Esophagus squamous epithelium (tissue), 5 donors: ENCODE measurements at regions of chr13 and their contacts with region 1.

Region 1: DNA sequence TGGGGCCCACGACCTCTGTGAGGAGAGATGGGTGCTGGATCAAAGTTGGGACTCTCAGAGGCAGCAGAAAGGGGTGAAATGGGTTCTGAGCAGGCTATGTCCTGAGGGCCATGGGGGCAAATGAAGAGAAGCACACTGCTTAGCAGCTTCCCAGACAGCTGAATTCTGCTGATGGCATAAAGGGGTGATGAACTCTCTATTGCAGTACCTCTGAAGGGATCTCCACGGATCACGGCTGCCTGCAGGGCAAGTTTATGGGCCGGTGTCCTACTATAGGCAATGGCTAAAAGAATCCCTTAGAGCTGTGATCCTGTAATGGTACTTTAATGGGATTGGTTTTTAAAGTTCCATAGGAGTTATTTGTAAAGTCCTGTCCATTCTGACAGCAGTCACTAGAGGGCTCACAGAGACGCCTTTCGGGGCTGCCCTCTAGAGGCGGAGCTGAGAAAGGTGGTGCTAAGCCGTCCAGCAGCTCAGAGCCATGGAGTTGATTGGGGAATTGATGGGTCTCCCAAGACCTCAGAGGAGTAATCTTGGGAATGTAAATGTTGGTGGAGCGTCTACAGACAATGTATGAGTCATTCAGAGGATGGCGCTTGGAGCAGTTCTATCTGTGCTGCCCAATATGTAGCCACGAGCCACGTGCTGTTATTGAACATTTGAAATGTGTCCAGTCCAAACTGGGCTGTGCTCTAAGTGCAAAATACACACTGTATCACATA is 287.3 kb downstream of the COG6 start:
- DNase-seq: no peak
- H3K4me3 ChIP-seq: no peak overlapping the region
- H3K27ac ChIP-seq: no peak overlapping the region
- H3K4me1 ChIP-seq: peaks cover 0 to 17% (median 7%) of the 10 kb centered on the region in 3 donors
- H3K27me3 ChIP-seq: no peaks in the 10 kb centered on the region
- CTCF ChIP-seq: peak; percentile 77 to 95 (median 83)
- POLR2A ChIP-seq: no peak

Region 2: GRCh38 chr13:39631307-39631706 is 311.4 kb before region 1 on chr13:
- intact Hi-C with region 1: no loop called
- DNase-seq: no peak
- H3K4me3 ChIP-seq: no peak overlapping the region
- H3K27ac ChIP-seq: no peak overlapping the region
- H3K4me1 ChIP-seq: no peaks in the 10 kb centered on the region
- H3K27me3 ChIP-seq: peaks cover 0 to 7% (median 0%) of the 10 kb centered on the region in 4 donors
- CTCF ChIP-seq: no peak
- POLR2A ChIP-seq: no peak

Region 3: GRCh38 chr13:40682449-40683240 is 739.9 kb after region 1 on chr13:
- intact Hi-C with region 1: loop called (anchors 10 kb)
- DNase-seq: no peak
- H3K4me3 ChIP-seq: no peak overlapping the region
- H3K27ac ChIP-seq: no peak overlapping the region
- H3K4me1 ChIP-seq: no peaks in the 10 kb centered on the region
- H3K27me3 ChIP-seq: no peaks in the 10 kb centered on the region
- CTCF ChIP-seq: peak in 5 of 6 experiments; percentile 38 to 71 (median 64)
- POLR2A ChIP-seq: no peak